ENCODE measurements at regions of chr2 and their contacts with region 1.

Region 1: GRCh38 chr2:218033590-218034496 is 31.0 kb upstream of the TNS1 start:
- DNase-seq: peak in 3 of 7 donors; percentile 12 to 56 (median 23)
- H3K4me3 ChIP-seq: no peak overlapping the region
- H3K27ac ChIP-seq: peak overlapping the region in 1 of 5 donors; percentile 54
- H3K4me1 ChIP-seq: peaks cover 0 to 4% of the 10 kb centered on the region in 2 donors
- H3K27me3 ChIP-seq: no peaks in the 10 kb centered on the region
- CTCF ChIP-seq: no peak
- POLR2A ChIP-seq: peak in 1 of 2 donors; percentile 29

Region 2: DNA sequence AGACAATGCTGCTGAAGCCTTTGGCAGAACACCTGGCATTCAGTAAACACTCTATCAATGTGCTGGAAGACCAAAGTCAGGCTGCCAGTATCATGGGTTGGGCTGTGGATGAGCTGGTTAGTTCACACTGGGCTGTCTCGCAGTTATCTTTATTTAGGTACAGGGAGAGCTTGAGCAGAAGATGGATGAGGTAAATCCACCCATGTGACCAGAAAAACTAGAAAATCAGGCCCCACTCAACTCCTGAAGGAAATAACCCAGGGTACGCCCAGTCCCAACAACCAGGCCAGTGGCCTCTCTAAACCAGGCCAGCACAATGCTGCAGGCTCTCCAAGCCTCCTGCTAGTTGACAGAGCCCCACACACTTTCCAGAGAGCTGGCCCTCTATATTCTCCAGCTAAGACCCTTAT is 361.3 kb before region 1 on chr2:
- intact Hi-C with region 1: no loop called
- DNase-seq: no peak
- H3K4me3 ChIP-seq: no peak overlapping the region
- H3K27ac ChIP-seq: no peak overlapping the region
- H3K4me1 ChIP-seq: no peaks in the 10 kb centered on the region
- H3K27me3 ChIP-seq: no peaks in the 10 kb centered on the region
- CTCF ChIP-seq: no peak
- POLR2A ChIP-seq: no peak

Region 3: GRCh38 chr2:217868911-217869334 is 164.9 kb before region 1 on chr2:
- intact Hi-C with region 1: no loop called
- DNase-seq: peak in 6 of 7 donors; percentile 75 to 84 (median 80)
- H3K4me3 ChIP-seq: no peak overlapping the region
- H3K27ac ChIP-seq: peak overlapping the region; percentile 14 to 84 (median 52)
- H3K4me1 ChIP-seq: peaks cover 8 to 53% of the 10 kb centered on the region in 2 donors
- H3K27me3 ChIP-seq: no peaks in the 10 kb centered on the region
- CTCF ChIP-seq: no peak
- POLR2A ChIP-seq: peak in 1 of 2 donors; percentile 17

Region 4: DNA sequence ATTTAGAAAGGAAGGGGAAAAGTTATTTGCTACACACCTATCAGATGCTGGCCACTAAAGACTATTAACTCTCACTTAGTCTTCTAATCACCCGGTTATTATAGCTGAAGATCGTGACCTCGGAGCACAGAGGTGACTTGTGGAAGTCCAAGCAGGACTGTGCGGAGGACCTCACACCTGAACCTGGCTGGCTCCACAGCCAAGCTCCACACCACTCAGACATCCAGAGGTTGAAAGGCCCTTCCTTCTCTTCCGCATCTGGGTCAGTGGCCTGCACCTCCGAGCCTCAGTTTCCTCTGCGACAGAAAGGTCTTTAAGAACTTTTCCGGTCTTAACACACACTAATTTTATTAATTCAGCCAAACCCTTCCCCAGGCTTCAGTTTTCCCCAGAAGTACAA is 88.9 kb before region 1 on chr2:
- intact Hi-C with region 1: loop called in 1 of 2 experiments (anchors 1 kb)
- DNase-seq: peak in 1 of 7 donors; percentile 13
- H3K4me3 ChIP-seq: no peak overlapping the region
- H3K27ac ChIP-seq: peak overlapping the region in 3 of 5 donors; percentile 17 to 98 (median 46)
- H3K4me1 ChIP-seq: peaks cover 36 to 79% of the 10 kb centered on the region in 2 donors
- H3K27me3 ChIP-seq: no peaks in the 10 kb centered on the region
- CTCF ChIP-seq: no peak
- POLR2A ChIP-seq: no peak

Region 5: GRCh38 chr2:218202266-218202665 is 168.4 kb after region 1 on chr2:
- intact Hi-C with region 1: no loop called
- DNase-seq: no peak
- H3K4me3 ChIP-seq: no peak overlapping the region
- H3K27ac ChIP-seq: no peak overlapping the region
- H3K4me1 ChIP-seq: no peaks in the 10 kb centered on the region
- H3K27me3 ChIP-seq: no peaks in the 10 kb centered on the region
- CTCF ChIP-seq: no peak
- POLR2A ChIP-seq: no peak

Measured in adrenal gland (tissue), 19 donors.